Activated CD4-positive, alpha-beta memory T cell treated with anti-CD3 and anti-CD28 coated beads for 36 hours (primary cell): ENCODE measurements at regions of chr1 and their contacts with region 1.

Region 1: DNA sequence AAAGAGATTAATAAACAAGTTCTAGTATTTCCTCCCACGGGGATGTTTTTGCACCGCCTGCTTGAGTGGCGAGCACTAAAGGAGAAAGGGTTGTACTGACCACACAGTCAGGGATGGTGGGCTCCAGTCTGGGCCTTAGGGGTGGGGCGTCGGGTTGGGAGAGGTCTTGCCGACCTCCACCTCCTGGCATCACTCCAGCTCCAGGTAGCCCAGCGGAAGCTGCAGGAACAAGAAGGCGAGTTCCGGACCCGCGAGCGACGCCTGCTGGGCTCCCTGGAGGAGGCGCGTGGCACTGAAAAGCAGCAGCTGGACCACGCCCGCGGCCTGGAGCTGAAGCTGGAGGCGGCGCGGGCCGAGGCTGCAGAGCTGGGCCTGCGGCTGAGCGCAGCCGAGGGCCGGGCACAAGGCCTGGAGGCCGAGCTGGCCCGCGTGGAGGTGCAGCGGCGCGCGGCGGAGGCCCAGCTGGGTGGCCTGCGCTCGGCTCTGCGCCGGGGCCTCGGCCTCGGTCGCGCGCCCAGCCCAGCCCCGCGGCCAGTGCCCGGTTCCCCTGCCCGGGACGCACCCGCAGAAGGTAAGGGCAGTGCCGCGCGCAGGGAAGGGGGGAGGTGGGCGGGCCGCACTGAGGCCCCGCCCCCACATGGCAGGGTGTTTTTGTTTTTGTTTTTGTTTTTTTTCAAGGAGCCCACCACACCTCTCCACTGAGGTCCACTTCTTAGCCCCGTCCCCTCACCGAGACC is 19.7 kb downstream of the MFAP2 start:
- DNase-seq: peak; percentile 91
- H3K4me3 Mint-ChIP-seq: peak overlapping the region; percentile 79
- H3K27ac Mint-ChIP-seq: peak overlapping the region; percentile 42
- H3K4me1 Mint-ChIP-seq: peaks cover 13% of the 10 kb centered on the region
- H3K27me3 Mint-ChIP-seq: no peaks in the 10 kb centered on the region

Region 2: DNA sequence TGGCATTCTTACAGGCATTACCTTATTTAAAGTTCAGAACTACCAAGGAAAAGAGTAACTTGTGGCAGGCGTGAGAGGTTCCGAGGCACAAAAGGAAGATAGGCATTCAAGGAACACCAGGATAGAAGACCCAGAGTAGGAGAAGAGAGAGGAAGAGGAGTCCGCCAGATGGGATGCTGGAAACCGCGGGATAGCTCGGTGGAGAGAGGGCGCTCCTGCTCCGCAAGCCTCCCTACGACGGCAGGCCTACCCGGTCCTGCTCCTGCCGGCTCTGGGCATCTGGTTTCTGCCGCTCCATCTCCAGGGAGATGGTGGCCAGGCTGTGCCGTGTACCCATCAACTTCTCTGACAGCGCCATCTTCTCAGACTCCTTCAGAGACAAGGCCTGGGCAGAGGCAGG is 342.0 kb before region 1 on chr1:
- CTCF ChIA-PET with region 1: interaction called, 14 read pairs
- POLR2A ChIA-PET with region 1: no interaction called
- intact Hi-C with region 1: no loop called
- DNase-seq: no peak
- H3K4me3 Mint-ChIP-seq: no peak overlapping the region
- H3K27ac Mint-ChIP-seq: no peak overlapping the region
- H3K4me1 Mint-ChIP-seq: no peaks in the 10 kb centered on the region
- H3K27me3 Mint-ChIP-seq: no peaks in the 10 kb centered on the region

Region 3: DNA sequence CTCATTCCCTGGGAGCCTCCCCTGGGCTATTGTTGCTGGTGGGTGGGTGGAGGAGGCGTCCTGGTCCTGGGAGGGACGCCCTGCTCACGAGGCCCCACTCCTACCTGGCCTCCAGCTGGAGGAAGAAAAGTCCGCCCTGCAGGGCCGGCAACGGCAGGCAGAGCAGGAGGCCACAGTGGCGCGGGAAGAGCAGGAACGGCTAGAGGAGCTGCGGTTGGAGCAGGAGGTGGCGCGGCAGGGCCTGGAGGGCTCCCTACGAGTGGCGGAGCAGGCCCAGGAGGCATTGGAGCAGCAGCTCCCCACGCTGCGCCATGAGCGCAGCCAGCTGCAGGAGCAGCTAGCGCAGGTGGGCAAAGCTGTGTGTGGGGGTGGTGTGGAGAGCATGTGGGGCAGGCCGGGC is 14.1 kb before region 1 on chr1:
- CTCF ChIA-PET with region 1: interaction called, 38 read pairs
- POLR2A ChIA-PET with region 1: no interaction called
- intact Hi-C with region 1: no loop called
- DNase-seq: no peak
- H3K4me3 Mint-ChIP-seq: no peak overlapping the region
- H3K27ac Mint-ChIP-seq: no peak overlapping the region
- H3K4me1 Mint-ChIP-seq: no peaks in the 10 kb centered on the region
- H3K27me3 Mint-ChIP-seq: no peaks in the 10 kb centered on the region

Region 4: DNA sequence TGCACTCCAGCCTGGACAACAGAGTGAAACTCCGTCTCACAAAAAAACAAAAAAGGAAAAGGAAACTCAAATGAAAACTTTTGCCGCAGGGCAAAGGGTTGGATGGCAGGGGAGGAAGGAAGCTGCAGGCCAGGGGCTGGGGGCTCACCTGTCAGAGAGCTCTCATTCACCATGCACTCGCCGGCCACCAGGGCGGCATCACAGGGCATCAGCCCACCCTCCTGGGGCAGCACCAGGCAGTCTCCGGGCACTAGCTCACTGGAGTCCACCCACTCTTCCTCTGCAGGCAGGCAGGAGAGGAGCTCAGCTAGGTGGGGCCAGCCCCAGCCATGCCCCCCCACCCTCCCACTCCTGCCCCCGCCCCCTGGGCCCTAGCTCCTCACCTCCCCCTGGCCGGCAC is 39.1 kb after region 1 on chr1:
- CTCF ChIA-PET with region 1: interaction called, 10 read pairs
- POLR2A ChIA-PET with region 1: no interaction called
- intact Hi-C with region 1: no loop called
- DNase-seq: no peak
- H3K4me3 Mint-ChIP-seq: no peak overlapping the region
- H3K27ac Mint-ChIP-seq: no peak overlapping the region
- H3K4me1 Mint-ChIP-seq: no peaks in the 10 kb centered on the region
- H3K27me3 Mint-ChIP-seq: no peaks in the 10 kb centered on the region

Region 5: DNA sequence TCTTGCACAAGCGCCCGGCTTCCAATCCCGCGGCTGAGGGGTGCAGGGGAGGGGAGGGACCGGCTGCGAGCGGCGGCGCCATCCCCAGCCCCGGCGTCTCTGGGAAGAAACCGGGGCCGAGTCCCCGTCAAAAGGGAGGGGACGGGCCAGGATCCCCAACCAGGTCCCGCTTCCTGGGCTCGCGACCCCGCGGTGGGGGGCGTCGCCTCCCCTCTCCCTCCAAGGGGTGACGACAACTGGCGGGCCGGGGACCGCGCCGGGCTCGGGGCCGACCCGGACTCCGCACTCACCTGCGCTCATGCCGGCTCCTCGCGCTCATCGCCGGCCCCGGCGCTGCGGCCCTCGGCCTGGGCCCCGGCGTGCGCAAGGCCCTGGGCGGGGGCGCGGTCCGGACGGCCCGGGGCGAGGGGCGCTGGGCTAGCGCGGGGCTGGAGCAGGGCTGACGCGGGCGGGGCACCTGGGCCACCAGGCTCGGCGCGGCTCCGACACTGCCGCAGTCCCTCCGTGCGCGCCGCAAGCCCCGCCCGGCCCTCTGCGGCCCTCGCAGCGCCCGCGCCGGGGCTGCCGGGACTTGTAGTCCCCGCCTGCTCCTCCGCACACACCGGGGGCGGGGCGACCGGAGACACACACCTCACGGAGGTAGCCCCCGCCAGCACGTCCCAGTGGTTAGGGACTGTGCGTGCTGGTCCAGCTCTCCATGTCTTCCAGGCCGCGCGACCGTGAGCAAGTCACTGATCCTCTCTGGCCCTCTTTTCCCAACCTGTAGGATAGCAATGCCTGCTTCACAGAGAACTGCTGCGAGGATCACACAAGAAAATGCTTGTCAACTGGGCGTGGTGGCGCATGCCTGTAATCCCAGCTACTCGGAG is 50.9 kb after region 1 on chr1 and contains the start of gene ATP13A2:
- CTCF ChIA-PET with region 1: interaction called, 11 read pairs
- POLR2A ChIA-PET with region 1: no interaction called
- intact Hi-C with region 1: loop called (anchors 2 kb)
- DNase-seq: peak; percentile 85
- H3K4me3 Mint-ChIP-seq: peak within 1 kb of the TSS; percentile 84
- H3K27ac Mint-ChIP-seq: peak within 1 kb of the TSS; percentile 28
- H3K4me1 Mint-ChIP-seq: peaks cover 14% of the 10 kb centered on the region
- H3K27me3 Mint-ChIP-seq: no peaks in the 10 kb centered on the region
- total RNA-seq, gene ATP13A2: 41.8 to 45.9 TPM

Region 6: DNA sequence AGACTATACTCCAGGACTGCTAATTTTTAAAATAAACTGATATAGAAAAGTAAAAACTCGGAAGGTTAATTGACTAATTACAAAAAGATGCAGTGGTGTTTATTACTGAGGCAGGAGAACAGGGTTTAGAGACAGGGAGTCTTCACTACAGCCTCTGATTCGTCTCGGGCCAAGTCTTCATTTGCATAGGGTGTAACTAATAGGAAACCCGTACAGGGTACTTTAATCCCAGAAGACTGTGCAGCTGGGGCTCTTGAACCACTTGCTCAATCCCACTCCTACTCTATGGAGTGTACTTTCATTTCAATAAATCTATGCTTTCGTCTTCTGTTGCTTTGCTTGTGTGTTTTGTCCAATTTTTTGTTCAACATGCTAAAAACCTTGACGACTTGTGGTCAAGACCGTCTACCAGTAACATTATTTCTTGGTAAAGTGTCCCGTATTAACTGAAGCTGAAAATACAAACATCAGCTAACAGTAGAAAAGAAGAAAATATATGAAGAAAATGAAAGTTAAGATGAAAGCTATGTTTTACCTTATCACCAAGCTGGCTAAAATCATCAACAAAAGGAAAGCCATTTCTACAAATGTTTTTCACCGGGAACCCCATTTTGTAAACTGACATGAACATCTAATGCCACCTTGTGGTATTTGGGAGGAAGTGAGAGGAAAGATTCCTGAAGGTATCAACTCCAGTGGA is 85.1 kb after region 1 on chr1:
- CTCF ChIA-PET with region 1: interaction called, 11 read pairs
- POLR2A ChIA-PET with region 1: interaction called, 3 read pairs
- intact Hi-C with region 1: loop called (anchors 5 kb)
- DNase-seq: no peak
- H3K4me3 Mint-ChIP-seq: no peak overlapping the region
- H3K27ac Mint-ChIP-seq: no peak overlapping the region
- H3K4me1 Mint-ChIP-seq: peaks cover 13% of the 10 kb centered on the region
- H3K27me3 Mint-ChIP-seq: no peaks in the 10 kb centered on the region

Region 7: GRCh38 chr1:17053685-17054410 is 93.1 kb after region 1 on chr1 and contains the start of gene SDHB:
- CTCF ChIA-PET with region 1: interaction called, 5 read pairs
- POLR2A ChIA-PET with region 1: no interaction called
- intact Hi-C with region 1: loop called (anchors 5 kb)
- DNase-seq: peak; percentile 100
- H3K4me3 Mint-ChIP-seq: peak within 1 kb of the TSS; percentile 96
- H3K27ac Mint-ChIP-seq: peak within 1 kb of the TSS; percentile 90
- H3K4me1 Mint-ChIP-seq: peaks cover 24% of the 10 kb centered on the region
- H3K27me3 Mint-ChIP-seq: no peaks in the 10 kb centered on the region
- total RNA-seq, gene SDHB: 154 to 163 TPM